ENCODE measurements at regions of chr12 and their contacts with region 1.

Region 1: GRCh38 chr12:14257734-14258574 is 107.5 kb upstream of the ATF7IP start:
- DNase-seq: peak; percentile 61 to 98 (median 94)
- ATAC-seq: peak; percentile 79 to 86 (median 84)
- H3K4me3 ChIP-seq: peak overlapping the region in 2 of 4 donors; percentile 15 to 28
- H3K27ac ChIP-seq: peak overlapping the region; percentile 65 to 93 (median 84)
- H3K4me1 ChIP-seq: peaks cover 16 to 39% (median 28%) of the 10 kb centered on the region in 3 donors
- H3K27me3 ChIP-seq: no peaks in the 10 kb centered on the region
- CTCF ChIP-seq: no peak

Region 2: GRCh38 chr12:14356147-14356546 is 98.2 kb after region 1 on chr12:
- intact Hi-C with region 1: loop called in 1 of 3 experiments (anchors 10 kb)
- DNase-seq: no peak
- ATAC-seq: no peak
- H3K4me3 ChIP-seq: no peak overlapping the region
- H3K27ac ChIP-seq: no peak overlapping the region
- H3K4me1 ChIP-seq: no peaks in the 10 kb centered on the region
- H3K27me3 ChIP-seq: no peaks in the 10 kb centered on the region
- CTCF ChIP-seq: no peak

Region 3: GRCh38 chr12:14384783-14385638 is 127.1 kb after region 1 on chr12:
- intact Hi-C with region 1: loop called in 1 of 3 experiments (anchors 10 kb)
- DNase-seq: peak in 3 of 6 donors; percentile 62 to 81 (median 72)
- ATAC-seq: peak; percentile 95 to 98 (median 96)
- H3K4me3 ChIP-seq: peak overlapping the region in 2 of 4 donors; percentile 20 to 28
- H3K27ac ChIP-seq: peak overlapping the region; percentile 24 to 75 (median 58)
- H3K4me1 ChIP-seq: peaks cover 16 to 37% (median 17%) of the 10 kb centered on the region in 3 donors
- H3K27me3 ChIP-seq: no peaks in the 10 kb centered on the region
- CTCF ChIP-seq: no peak